ENCODE measurements at regions of chr17 and their contacts with region 1.

Region 1: DNA sequence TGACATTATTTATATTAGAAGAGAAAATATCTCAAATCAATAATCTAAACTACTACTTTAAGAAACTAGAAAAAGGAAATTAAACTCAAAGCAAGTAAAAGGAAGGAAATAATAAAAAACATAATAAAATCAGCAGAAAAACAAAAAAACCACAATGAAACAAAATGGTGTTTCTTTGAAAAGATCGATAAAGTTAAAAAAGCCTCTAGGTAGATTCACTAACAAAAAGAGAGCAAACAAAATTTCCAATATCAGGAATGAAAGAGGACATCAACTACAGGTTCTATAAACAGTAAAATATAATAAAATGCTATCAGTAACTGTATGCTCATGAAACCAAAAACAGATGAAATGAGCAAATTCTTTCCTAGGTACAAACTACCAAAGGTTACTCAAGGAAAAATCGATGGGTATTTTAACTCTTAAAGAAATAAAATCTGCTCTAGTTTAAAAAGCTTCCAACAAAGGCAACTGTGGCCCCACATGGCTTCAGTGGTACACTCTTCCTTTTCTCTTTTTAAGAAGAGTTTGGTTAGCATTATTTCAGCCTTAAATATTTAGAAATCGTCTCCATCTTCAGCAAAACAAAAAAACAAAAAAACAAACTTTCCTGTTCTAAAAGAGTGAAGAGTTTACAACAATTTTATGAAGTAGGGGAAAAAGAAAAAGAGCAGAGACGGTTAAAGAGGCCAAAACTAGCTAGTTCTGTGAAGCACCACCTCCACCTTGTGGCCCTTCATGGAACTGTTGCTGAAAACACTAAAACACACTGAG is 102.2 kb downstream of the TRIM37 start:
- DNase-seq: peak; percentile 32 to 85 (median 60)
- ATAC-seq: peak; percentile 38 to 61 (median 54)
- H3K4me3 ChIP-seq: no peak overlapping the region
- H3K4me3 Mint-ChIP-seq: no peak overlapping the region
- H3K27ac ChIP-seq: peak overlapping the region; percentile 1
- H3K27ac Mint-ChIP-seq: peak overlapping the region; percentile 61 to 62
- H3K4me1 ChIP-seq: peaks cover 5 to 13% of the 10 kb centered on the region in 2 experiments
- H3K4me1 Mint-ChIP-seq: peaks cover 17 to 19% (median 18%) of the 10 kb centered on the region in 3 donors
- H3K27me3 ChIP-seq: no peaks in the 10 kb centered on the region
- H3K27me3 Mint-ChIP-seq: no peaks in the 10 kb centered on the region

Region 2: GRCh38 chr17:58507123-58507634 is 497.3 kb before region 1 on chr17:
- CTCF ChIA-PET with region 1: no interaction called
- POLR2A ChIA-PET with region 1: no interaction called
- DNase-seq: no peak
- ATAC-seq: no peak
- H3K4me3 ChIP-seq: no peak overlapping the region
- H3K4me3 Mint-ChIP-seq: no peak overlapping the region
- H3K27ac ChIP-seq: no peak overlapping the region
- H3K27ac Mint-ChIP-seq: no peak overlapping the region
- H3K4me1 ChIP-seq: peaks cover 0 to 3% of the 10 kb centered on the region in 2 experiments
- H3K4me1 Mint-ChIP-seq: peaks cover 7 to 18% (median 9%) of the 10 kb centered on the region in 3 donors
- H3K27me3 ChIP-seq: no peaks in the 10 kb centered on the region
- H3K27me3 Mint-ChIP-seq: no peaks in the 10 kb centered on the region

Region 3: GRCh38 chr17:58517734-58518609 is 486.6 kb before region 1 on chr17:
- CTCF ChIA-PET with region 1: interaction called, 4 to 24 read pairs
- POLR2A ChIA-PET with region 1: interaction called in 1 of 2 experiments, 5 read pairs
- DNase-seq: peak; percentile 97 to 100 (median 100)
- ATAC-seq: peak; percentile 79 to 84 (median 82)
- H3K4me3 ChIP-seq: peak overlapping the region; percentile 87 to 98
- H3K4me3 Mint-ChIP-seq: peak overlapping the region; percentile 95 to 97 (median 96)
- H3K27ac ChIP-seq: peak overlapping the region; percentile 75
- H3K27ac Mint-ChIP-seq: peak overlapping the region; percentile 95 to 97
- H3K4me1 ChIP-seq: peaks cover 38 to 43% of the 10 kb centered on the region in 2 experiments
- H3K4me1 Mint-ChIP-seq: peaks cover 41 to 46% (median 42%) of the 10 kb centered on the region in 3 donors
- H3K27me3 ChIP-seq: no peaks in the 10 kb centered on the region
- H3K27me3 Mint-ChIP-seq: no peaks in the 10 kb centered on the region

Region 4: DNA sequence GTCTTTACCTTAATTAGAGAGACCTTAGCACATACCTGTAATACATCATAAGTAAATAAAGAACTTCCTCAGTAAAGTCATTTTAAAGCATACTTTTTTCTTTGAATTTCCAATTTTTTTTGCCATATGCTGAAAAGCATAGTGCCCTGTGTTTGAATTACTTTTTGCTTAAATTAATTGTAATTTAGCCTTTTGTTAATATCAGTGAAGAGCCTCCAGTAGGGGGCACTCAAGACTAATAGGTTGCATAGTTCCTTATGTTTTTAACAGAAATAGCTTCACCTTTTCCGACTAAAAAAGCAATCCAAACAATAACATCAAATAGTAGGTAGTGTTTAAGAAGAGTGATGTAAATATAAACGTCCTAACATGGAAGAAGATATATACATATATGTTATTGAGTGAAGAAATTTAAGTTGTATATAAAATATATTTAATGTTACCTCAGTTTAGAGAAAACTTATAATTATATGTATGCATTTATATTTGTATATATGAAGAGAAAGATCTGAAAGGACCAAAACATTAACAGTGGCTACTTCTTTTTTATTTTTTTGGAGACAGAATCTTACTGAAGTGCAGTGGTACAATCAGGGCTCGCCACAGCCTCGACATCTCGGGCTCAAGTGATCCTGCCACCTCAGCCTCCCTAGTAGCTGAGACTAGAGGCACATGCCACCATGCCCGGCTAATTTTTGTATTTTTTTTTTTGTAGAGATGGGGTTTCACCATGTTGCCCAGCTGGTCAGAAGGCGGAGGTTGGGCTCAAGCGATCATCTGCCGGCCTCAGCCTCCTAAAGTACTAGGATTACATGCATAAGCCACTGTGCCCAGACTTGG is 293.4 kb before region 1 on chr17:
- CTCF ChIA-PET with region 1: interaction called in 1 of 2 experiments, 24 read pairs
- POLR2A ChIA-PET with region 1: interaction called in 1 of 2 experiments, 6 read pairs
- DNase-seq: peak in 20 of 35 experiments; percentile 5 to 71 (median 21)
- ATAC-seq: no peak
- H3K4me3 ChIP-seq: no peak overlapping the region
- H3K4me3 Mint-ChIP-seq: no peak overlapping the region
- H3K27ac ChIP-seq: no peak overlapping the region
- H3K27ac Mint-ChIP-seq: no peak overlapping the region
- H3K4me1 ChIP-seq: no peaks in the 10 kb centered on the region
- H3K4me1 Mint-ChIP-seq: peaks cover 0 to 6% (median 2%) of the 10 kb centered on the region in 3 donors
- H3K27me3 ChIP-seq: no peaks in the 10 kb centered on the region
- H3K27me3 Mint-ChIP-seq: no peaks in the 10 kb centered on the region

Measured in T-cell (primary cell).